Activated T-helper 1 cell treated with anti-CD3 and anti-CD28 coated beads, Interleukin-12 subunit alpha, Interleukin-12 subunit beta, Interleukin-2, Interleukin-4 antibody, amounts not matched to agents 30 ng/mL and 10 ng/mL and 1 ng/mL, durations not matched to agents 14 hours and 24 hours and 36 hours (primary cell): ENCODE measurements at regions of chr7 and their contacts with region 1.

Region 1: GRCh38 chr7:44240983-44241510 is 40.3 kb downstream of the YKT6 start:
- DNase-seq: peak; percentile 46
- H3K4me3 Mint-ChIP-seq: no peak overlapping the region
- H3K27ac Mint-ChIP-seq: peak overlapping the region; percentile 4
- H3K4me1 Mint-ChIP-seq: no peaks in the 10 kb centered on the region
- H3K27me3 Mint-ChIP-seq: no peaks in the 10 kb centered on the region

Region 2: DNA sequence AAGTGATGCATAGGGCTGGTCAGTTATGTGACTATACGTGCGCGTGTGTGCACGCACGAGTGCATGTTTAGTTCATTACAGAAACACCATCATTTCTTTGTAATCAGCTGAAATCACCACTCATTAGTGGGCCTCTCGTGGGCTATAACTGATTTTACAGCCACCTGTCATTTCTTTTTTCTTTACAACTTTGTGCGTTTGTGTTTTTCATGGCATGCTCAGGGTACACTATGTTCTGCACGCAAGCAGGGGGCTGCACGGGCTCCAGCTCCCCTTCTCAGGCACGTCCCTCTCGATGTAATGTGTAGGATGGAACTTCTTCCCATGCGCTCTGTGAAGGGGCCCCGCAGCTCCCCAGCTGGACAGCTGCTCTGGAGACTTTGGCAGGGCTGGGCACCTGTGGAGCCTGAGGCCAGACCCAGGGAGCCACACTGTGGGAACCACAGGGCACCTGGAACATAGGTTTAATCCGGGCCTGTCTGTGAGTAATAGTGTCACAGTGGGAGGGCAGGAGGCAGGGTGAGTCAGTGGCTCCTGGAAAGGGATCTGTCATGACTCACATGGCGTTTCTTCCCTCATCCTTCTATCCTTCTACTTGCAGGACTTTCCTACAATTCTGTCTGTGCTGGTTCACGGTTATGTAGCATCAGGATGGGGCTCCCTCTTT is 56.7 kb before region 1 on chr7:
- intact Hi-C with region 1: no loop called
- DNase-seq: no peak
- H3K4me3 Mint-ChIP-seq: no peak overlapping the region
- H3K27ac Mint-ChIP-seq: no peak overlapping the region
- H3K4me1 Mint-ChIP-seq: no peaks in the 10 kb centered on the region
- H3K27me3 Mint-ChIP-seq: peaks cover 7% of the 10 kb centered on the region

Region 3: DNA sequence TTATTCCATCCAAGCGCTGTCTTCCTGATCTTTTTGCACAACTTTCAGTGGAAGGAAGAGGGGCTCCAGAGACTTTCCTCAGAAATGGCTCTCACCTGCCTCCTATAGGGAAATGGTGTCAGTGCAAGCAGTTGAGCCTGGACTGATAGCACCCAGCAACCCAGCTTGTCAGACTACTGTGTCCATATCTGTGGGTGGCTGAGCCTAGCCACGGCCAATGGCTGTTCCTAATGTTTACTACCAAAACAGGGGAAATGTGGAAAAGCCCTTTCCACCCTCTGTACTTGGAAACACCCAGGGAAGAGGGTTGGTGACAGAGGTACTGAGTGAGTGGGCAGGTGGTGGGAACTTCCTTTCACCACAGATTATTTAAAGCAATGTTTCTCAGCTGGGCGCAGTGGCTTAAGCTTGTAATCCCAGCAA is 44.6 kb before region 1 on chr7:
- intact Hi-C with region 1: no loop called
- DNase-seq: peak; percentile 10
- H3K4me3 Mint-ChIP-seq: no peak overlapping the region
- H3K27ac Mint-ChIP-seq: no peak overlapping the region
- H3K4me1 Mint-ChIP-seq: peaks cover 24% of the 10 kb centered on the region
- H3K27me3 Mint-ChIP-seq: no peaks in the 10 kb centered on the region

Region 4: GRCh38 chr7:44257618-44258422 is 16.8 kb after region 1 on chr7:
- intact Hi-C with region 1: loop called (anchors 1 kb)
- DNase-seq: peak; percentile 69
- H3K4me3 Mint-ChIP-seq: peak overlapping the region; percentile 56
- H3K27ac Mint-ChIP-seq: peak overlapping the region; percentile 78
- H3K4me1 Mint-ChIP-seq: peaks cover 34% of the 10 kb centered on the region
- H3K27me3 Mint-ChIP-seq: no peaks in the 10 kb centered on the region

Region 5: GRCh38 chr7:44307301-44307900 is 66.4 kb after region 1 on chr7:
- intact Hi-C with region 1: loop called (anchors 1 kb)
- DNase-seq: no peak
- H3K4me3 Mint-ChIP-seq: no peak overlapping the region
- H3K27ac Mint-ChIP-seq: no peak overlapping the region
- H3K4me1 Mint-ChIP-seq: no peaks in the 10 kb centered on the region
- H3K27me3 Mint-ChIP-seq: peaks cover 15% of the 10 kb centered on the region

Region 6: GRCh38 chr7:44565097-44565794 is 324.2 kb after region 1 on chr7:
- intact Hi-C with region 1: loop called (anchors 1 kb)
- DNase-seq: peak; percentile 45
- H3K4me3 Mint-ChIP-seq: no peak overlapping the region
- H3K27ac Mint-ChIP-seq: no peak overlapping the region
- H3K4me1 Mint-ChIP-seq: no peaks in the 10 kb centered on the region
- H3K27me3 Mint-ChIP-seq: no peaks in the 10 kb centered on the region